AG04449 (cell line): ENCODE measurements at regions of chr16 and their contacts with region 1.

Region 1: DNA sequence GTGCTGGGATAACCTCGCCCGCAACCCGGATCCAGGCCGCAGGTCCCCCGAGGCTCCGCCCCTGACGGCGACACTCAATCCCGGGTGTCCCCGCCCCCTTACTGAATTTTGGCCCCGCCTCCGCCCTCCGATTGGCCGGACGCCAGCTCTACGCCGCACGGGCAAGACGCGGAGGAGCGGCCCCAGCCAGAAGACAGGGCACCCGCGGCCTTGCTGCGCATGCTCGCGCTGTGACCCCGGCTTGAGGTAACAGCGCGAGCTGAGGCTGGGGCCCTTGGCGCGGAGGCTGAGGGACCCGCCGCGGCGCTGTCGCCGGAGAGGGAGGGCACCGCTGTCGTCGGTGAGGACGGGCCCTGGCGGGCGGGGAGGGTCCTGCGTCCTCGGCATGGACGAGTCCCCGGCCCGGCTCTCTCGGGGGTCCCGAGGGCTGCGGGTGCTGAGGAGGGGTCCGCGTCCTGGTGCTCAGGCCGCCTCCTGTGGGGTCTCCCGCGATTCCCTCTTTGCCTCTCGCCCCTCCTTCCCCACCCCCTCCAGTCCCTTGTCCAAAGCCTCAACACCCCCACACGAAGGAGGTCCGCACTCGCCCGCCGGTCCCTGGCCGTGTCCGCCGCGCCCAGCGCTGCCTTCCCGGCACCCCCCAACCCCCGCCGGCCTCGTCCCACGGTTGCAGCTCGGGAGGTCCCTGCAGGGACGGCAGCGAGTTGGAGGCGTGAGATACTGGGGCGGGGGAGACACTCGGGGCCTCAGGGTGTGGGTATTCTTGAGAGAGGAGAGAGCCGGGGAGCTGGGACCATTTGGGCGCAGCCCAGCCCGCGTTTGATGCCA is at the start of gene FLYWCH2:
- DNase-seq: peak; percentile 63
- H3K4me3 ChIP-seq: peak within 1 kb of the TSS; percentile 83
- CTCF ChIP-seq: no peak

Region 2: DNA sequence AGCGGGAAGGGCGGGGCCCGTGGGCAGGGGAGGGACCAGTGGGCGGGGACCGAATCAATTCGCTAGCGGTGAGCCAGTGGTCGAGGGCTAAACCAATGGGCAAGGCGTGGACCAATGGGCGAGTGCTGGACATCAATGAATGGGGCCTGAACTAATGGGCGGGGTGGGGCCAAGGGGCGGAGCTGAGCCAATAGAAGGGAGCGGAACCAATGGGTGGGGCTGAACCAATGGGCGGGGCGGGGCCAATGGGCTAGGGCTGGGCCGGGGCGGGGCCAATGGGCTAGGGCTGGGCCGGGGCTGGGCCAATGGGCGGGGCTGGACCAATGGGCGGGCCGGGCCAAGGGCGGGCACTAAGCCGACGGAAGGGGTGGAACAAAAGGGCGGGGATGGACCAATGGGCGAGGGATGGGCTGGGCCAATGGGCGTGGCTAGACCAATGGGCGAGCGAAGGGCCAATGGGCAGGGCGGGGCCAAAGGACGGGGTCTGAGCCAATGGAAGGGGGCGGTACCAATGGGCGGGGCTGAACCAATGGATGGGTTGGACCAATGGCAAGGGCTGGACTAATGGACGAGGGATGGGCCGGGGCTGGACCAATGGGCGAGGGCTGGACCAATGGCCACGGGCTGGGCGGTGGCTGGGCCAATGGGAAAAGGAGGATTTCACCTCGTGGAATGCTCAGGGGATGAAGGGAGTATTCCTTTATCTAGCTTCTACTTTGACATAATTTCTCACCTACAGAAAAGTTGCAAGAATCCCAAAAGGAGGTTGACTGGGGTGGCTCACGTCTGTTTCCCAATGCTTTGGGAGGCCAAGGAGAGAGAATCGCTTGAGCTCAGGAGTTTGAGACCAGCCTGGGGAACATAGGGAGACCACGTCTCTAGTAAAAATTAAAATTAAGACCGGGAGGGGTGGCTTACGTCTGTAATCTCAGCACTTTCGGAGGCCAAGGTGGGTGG is 22.5 kb after region 1 on chr16:
- CTCF ChIA-PET with region 1: interaction called, 7 read pairs
- POLR2A ChIA-PET with region 1: interaction called, 11 read pairs
- DNase-seq: peak; percentile 95
- H3K4me3 ChIP-seq: peak overlapping the region; percentile 78
- CTCF ChIP-seq: no peak

Region 3: DNA sequence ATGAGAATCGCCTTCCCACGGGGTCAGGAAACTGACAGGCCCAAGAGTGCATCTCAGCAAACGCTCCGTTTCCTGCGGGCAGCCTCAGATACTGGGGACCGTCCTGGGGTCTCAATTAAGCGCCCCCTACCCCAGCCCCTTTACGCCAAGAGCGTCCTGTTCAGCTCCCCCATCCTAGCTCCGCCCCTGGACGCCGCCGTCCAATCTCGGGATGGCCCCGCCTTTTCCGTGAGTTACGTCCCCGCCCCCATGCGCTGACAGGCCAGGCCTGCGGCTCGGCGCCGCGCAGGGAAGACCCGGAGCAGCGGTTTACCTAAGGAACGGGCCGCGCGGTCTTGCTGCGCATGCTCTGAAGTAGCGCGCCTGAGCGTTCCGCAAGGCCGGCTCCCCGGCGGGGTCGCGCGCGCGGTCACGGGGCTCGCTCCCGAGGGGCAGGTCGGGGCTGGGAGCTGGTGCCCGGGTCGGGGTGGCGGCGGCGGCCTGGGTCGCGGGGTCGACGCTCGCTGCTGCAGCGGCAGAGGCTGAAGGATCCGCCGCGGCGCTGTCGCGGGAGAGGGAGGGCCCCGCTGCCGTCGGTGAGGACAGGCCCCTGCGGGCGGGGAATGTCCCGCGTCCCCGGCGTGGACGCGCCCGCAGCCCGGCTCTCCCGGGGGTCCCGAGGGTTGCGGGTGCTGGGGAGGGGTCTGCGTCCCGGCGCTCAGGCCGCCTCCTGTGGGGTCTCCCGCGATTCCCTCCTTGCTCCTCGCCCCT is 28.5 kb after region 1 on chr16 and contains the start of gene FLYWCH1:
- CTCF ChIA-PET with region 1: interaction called, 396 read pairs
- POLR2A ChIA-PET with region 1: interaction called, 14 read pairs
- DNase-seq: peak; percentile 80
- H3K4me3 ChIP-seq: peak within 1 kb of the TSS; percentile 85
- CTCF ChIP-seq: no peak

Region 4: DNA sequence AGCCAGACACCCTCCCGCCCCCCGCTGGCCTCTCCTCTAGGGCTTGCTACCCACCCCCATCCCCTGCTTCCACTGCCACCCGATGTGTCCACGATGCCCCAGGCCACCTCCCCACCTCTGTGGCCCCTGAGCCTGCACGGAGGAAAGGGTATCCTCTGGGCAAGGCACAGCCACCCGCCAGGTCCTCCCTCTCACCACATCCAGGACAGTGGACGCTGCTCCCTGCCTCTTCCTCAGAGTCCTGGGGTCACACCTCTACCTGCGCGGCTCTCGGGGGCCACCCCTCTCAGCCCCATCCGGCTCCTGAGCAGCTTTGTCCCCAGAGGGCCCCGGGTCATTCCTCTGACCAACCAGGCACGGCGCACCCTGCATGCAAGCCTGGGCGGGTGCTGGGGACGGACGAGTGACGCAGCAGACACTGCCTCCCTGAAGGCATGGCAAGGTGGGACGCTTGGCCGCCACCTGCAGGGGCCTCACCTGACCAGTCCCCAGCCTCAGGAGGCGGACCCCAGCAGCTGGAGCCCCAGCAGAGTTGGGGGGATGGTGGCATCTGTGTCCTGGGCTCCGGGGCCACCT is 53.3 kb after region 1 on chr16:
- CTCF ChIA-PET with region 1: no interaction called
- POLR2A ChIA-PET with region 1: no interaction called
- DNase-seq: no peak
- H3K4me3 ChIP-seq: no peak overlapping the region
- CTCF ChIP-seq: no peak